CD8-positive, alpha-beta T cell (primary cell): ENCODE measurements at regions of chr3 and their contacts with region 1.

Region 1: GRCh38 chr3:58704745-58705144 is 38.2 kb upstream of the FAM3D start:
- DNase-seq: no peak
- ATAC-seq: no peak
- H3K4me3 ChIP-seq: no peak overlapping the region
- H3K4me3 Mint-ChIP-seq: no peak overlapping the region
- H3K27ac ChIP-seq: no peak overlapping the region
- H3K27ac Mint-ChIP-seq: no peak overlapping the region
- H3K4me1 ChIP-seq: no peaks in the 10 kb centered on the region
- H3K4me1 Mint-ChIP-seq: no peaks in the 10 kb centered on the region
- H3K27me3 ChIP-seq: no peaks in the 10 kb centered on the region
- H3K27me3 Mint-ChIP-seq: no peaks in the 10 kb centered on the region
- CTCF ChIP-seq: no peak

Region 2: GRCh38 chr3:58202917-58203360 is 501.8 kb before region 1 on chr3:
- CTCF ChIA-PET with region 1: no interaction called
- POLR2A ChIA-PET with region 1: no interaction called
- intact Hi-C with region 1: loop called in 1 of 2 experiments (anchors 5 kb)
- DNase-seq: no peak
- ATAC-seq: no peak
- H3K4me3 ChIP-seq: no peak overlapping the region
- H3K4me3 Mint-ChIP-seq: no peak overlapping the region
- H3K27ac ChIP-seq: no peak overlapping the region
- H3K27ac Mint-ChIP-seq: no peak overlapping the region
- H3K4me1 ChIP-seq: no peaks in the 10 kb centered on the region
- H3K4me1 Mint-ChIP-seq: peaks cover 7% of the 10 kb centered on the region
- H3K27me3 ChIP-seq: no peaks in the 10 kb centered on the region
- H3K27me3 Mint-ChIP-seq: peaks cover 11% of the 10 kb centered on the region
- CTCF ChIP-seq: no peak